IMR-90 (cell line): ENCODE measurements at regions of chr9 and their contacts with region 1.

Region 1: DNA sequence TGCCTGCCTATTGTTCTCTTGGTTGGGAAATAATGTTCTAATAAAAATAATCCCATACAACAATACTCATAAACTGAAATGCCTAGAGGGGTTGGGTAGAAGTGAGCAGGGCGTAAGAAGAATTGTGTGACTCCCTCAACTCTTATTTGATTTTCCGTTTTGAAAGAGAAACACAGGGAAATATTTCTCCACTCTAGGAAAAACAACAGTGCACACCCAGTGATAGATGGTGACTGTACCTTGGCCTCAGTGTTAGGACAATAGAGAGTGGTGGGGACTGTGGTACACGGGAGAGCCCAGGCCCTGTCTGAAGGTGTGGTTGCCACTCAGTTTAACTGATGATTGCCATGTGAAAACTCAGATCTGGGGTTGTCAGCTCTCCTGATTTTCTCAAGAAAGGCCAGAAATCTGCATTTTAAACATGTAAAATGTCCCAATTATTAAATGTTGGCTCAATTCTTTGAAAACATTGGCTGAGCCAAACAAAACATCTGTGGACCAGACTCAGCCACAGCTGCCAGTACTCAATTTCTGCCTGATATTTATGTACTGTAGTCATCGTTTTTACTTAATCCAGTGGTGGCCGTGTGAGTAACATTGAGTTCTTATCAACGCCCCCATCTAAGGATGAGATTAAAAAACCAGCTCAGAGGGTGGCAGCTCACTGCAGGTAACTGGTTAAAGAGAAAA is 103.8 kb upstream of the ZNF618 start:
- DNase-seq: peak; percentile 52
- ATAC-seq: 0 out of 2 replicates have a peak, but pooled peaks have one; percentile 21
- H3K4me3 ChIP-seq: no peak overlapping the region
- H3K27ac ChIP-seq: no peak overlapping the region
- H3K4me1 ChIP-seq: no peaks in the 10 kb centered on the region
- H3K27me3 ChIP-seq: peaks cover 52% of the 10 kb centered on the region
- CTCF ChIP-seq: no peak
- POLR2A ChIP-seq: no peak
- RAD21 ChIP-seq: no peak

Region 2: GRCh38 chr9:113853324-113853723 is 81.1 kb after region 1 on chr9:
- CTCF ChIA-PET with region 1: no interaction called
- POLR2A ChIA-PET with region 1: no interaction called
- dilution Hi-C with region 1: no loop called
- in situ Hi-C with region 1: loop called (anchors 25 kb)
- intact Hi-C with region 1: no loop called
- DNase-seq: no peak
- ATAC-seq: no peak
- H3K4me3 ChIP-seq: no peak overlapping the region
- H3K27ac ChIP-seq: no peak overlapping the region
- H3K4me1 ChIP-seq: no peaks in the 10 kb centered on the region
- H3K27me3 ChIP-seq: peaks cover 15% of the 10 kb centered on the region
- CTCF ChIP-seq: 0 out of 2 replicates have a peak, but pooled peaks have one; percentile 22
- POLR2A ChIP-seq: no peak
- RAD21 ChIP-seq: no peak; the same call in 1 of the 2 replicates